Gastrocnemius medialis (tissue), 4 donors: ENCODE measurements at regions of chr5 and their contacts with region 1.

Region 1: DNA sequence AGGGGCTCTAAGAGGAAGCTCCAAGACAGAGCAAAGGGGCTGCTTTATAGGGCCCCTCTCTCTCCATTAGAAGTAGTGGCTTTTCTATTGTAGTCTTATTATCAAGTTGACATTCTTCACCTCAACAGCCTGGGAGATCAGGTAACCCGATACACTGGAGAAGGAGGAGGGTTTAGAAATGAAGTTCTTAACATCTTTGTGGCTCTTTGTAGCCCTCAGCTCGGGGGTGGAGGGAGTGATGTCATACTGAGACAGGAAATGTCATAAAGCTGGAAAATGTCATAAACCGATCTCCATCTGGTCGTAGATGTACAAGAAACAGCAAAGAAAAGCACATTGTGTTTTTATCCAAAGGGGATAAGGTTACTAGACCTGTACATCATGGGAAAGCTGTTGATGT is 17.9 kb downstream of the PDZD2 start:
- DNase-seq: no peak
- ATAC-seq: no peak
- H3K4me3 ChIP-seq: no peak overlapping the region
- H3K27ac ChIP-seq: no peak overlapping the region
- H3K4me1 ChIP-seq: no peaks in the 10 kb centered on the region
- H3K27me3 ChIP-seq: no peaks in the 10 kb centered on the region
- CTCF ChIP-seq: no peak
- POLR2A ChIP-seq: no peak

Region 2: GRCh38 chr5:31573494-31574142 is 83.2 kb before region 1 on chr5:
- in situ Hi-C with region 1: no loop called
- intact Hi-C with region 1: no loop called
- DNase-seq: no peak
- ATAC-seq: no peak
- H3K4me3 ChIP-seq: no peak overlapping the region
- H3K27ac ChIP-seq: no peak overlapping the region
- H3K4me1 ChIP-seq: no peaks in the 10 kb centered on the region
- H3K27me3 ChIP-seq: no peaks in the 10 kb centered on the region
- CTCF ChIP-seq: no peak
- POLR2A ChIP-seq: no peak

Region 3: GRCh38 chr5:31738199-31738598 is 81.4 kb after region 1 on chr5:
- in situ Hi-C with region 1: loop called in 1 of 4 experiments (anchors 5 kb)
- intact Hi-C with region 1: no loop called
- DNase-seq: no peak
- ATAC-seq: peak in 1 of 2 donors; percentile 43
- H3K4me3 ChIP-seq: no peak overlapping the region
- H3K27ac ChIP-seq: no peak overlapping the region
- H3K4me1 ChIP-seq: peaks cover 0 to 24% of the 10 kb centered on the region in 2 donors
- H3K27me3 ChIP-seq: no peaks in the 10 kb centered on the region
- CTCF ChIP-seq: no peak
- POLR2A ChIP-seq: no peak

Region 4: DNA sequence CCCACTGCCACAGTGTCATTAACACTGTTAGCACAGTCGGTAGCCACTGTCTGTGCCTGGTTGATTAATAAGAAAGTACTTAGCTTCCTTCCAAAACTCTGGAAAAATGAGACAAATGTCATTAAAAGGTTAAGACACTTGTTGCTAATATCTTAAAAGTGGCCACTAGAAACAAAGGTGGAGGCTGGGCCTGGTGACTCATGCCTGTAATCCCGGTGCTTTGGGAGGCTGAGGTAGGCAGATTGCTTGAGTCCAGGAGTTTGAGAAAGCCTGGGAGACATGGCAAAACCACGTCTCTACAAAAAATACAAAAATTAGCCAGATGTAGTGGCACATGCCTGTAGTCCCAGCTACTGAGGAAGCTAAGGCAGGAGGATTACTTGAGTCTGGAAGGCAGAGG is 176.2 kb after region 1 on chr5:
- in situ Hi-C with region 1: no loop called
- intact Hi-C with region 1: no loop called
- DNase-seq: no peak
- ATAC-seq: no peak
- H3K4me3 ChIP-seq: no peak overlapping the region
- H3K27ac ChIP-seq: no peak overlapping the region
- H3K4me1 ChIP-seq: no peaks in the 10 kb centered on the region
- H3K27me3 ChIP-seq: no peaks in the 10 kb centered on the region
- CTCF ChIP-seq: no peak
- POLR2A ChIP-seq: no peak